HAP-1 (cell line): ENCODE measurements at regions of chr6 and their contacts with region 1.

Region 1: DNA sequence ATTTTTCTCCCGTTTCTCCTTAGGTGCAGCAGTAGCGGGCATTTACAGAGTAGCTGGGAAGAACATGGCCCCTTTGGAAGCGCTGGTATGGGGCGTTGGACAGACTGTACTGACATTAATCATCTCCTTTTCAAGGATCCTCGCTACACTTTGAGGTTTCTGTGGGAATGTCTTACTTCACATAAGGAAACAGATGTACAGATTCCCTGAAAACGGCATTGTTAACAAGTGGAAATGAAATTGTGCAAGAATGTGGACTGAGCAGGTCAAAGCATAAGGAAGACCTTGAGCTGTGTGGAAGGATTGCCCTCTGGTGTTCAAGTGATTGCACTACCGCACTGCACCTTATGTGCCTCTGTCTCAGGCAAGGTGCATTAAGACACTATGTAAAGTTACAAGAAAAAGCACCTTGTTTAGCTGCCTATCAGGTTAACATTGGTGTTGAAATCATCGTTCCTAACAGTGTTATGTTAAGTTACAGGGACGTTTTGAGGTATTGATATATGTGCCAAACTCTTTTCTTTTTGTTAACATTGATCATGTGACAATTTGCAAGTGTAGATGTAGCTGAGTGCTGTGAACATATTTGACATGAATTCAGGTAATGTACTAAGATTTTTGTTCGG is 38.0 kb downstream of the TMEM170B start:
- DNase-seq: peak; percentile 73 to 79
- H3K4me3 ChIP-seq: no peak overlapping the region
- H3K4me1 ChIP-seq: no peaks in the 10 kb centered on the region
- H3K27me3 ChIP-seq: no peaks in the 10 kb centered on the region

Region 2: DNA sequence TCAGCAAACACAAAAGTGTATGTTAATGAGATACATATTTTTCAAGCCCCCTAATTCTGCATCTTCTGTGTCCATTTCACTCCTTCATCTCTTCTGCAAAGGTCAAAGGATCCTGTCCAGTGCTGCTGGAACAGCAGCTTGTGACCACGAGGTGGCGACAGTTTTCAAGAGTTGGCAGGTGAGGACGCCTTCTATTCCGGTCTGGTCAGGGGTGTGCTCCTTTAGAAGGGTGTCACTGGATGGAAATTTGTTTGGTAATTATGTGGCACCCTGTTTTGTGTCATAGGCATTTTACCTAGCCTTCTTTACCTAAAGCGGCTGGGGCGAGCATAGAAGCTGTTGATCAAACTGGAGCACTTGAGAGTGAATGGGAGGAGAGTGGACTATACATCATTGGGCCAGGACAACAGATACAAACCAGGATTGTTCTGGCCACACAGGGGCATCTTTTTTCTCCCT is 431.1 kb before region 1 on chr6:
- in situ Hi-C with region 1: loop called (anchors 10 kb)
- DNase-seq: peak; percentile 69 to 90
- H3K4me3 ChIP-seq: no peak overlapping the region
- H3K4me1 ChIP-seq: peaks cover 11% of the 10 kb centered on the region
- H3K27me3 ChIP-seq: no peaks in the 10 kb centered on the region